SK-N-SH (cell line): ENCODE measurements at regions of chr9 and their contacts with region 1.

Region 1: GRCh38 chr9:87812375-87813118 is 70.1 kb upstream of the SPATA31E1 start:
- DNase-seq: peak; percentile 60
- H3K4me3 ChIP-seq: peak overlapping the region in 1 of 2 experiments; percentile 5; a peak in 1 of 4 replicates
- H3K27ac ChIP-seq: no peak overlapping the region
- H3K4me1 ChIP-seq: no peaks in the 10 kb centered on the region
- H3K27me3 ChIP-seq: no peaks in the 10 kb centered on the region
- CTCF ChIP-seq: peak; percentile 78
- EP300 ChIP-seq: no peak
- RAD21 ChIP-seq: peak; percentile 81

Region 2: GRCh38 chr9:87678650-87679515 is 133.7 kb before region 1 on chr9:
- CTCF ChIA-PET with region 1: interaction called, 44 read pairs
- POLR2A ChIA-PET with region 1: no interaction called
- DNase-seq: peak; percentile 84
- H3K4me3 ChIP-seq: peak overlapping the region in 1 of 2 experiments; percentile 24; a peak in 1 of 4 replicates
- H3K27ac ChIP-seq: no peak overlapping the region
- H3K4me1 ChIP-seq: no peaks in the 10 kb centered on the region; a peak in 1 of 4 replicates
- H3K27me3 ChIP-seq: no peaks in the 10 kb centered on the region
- CTCF ChIP-seq: peak; percentile 83
- EP300 ChIP-seq: no peak
- RAD21 ChIP-seq: peak; percentile 84

Region 3: GRCh38 chr9:88106491-88106890 is 293.9 kb after region 1 on chr9:
- CTCF ChIA-PET with region 1: no interaction called
- POLR2A ChIA-PET with region 1: no interaction called
- DNase-seq: peak; percentile 29
- H3K4me3 ChIP-seq: no peak overlapping the region
- H3K27ac ChIP-seq: no peak overlapping the region
- H3K4me1 ChIP-seq: no peaks in the 10 kb centered on the region
- H3K27me3 ChIP-seq: no peaks in the 10 kb centered on the region
- CTCF ChIP-seq: peak; percentile 35
- EP300 ChIP-seq: no peak
- RAD21 ChIP-seq: peak; percentile 67